ENCODE measurements at regions of chr5 and their contacts with region 1.

Region 1: GRCh38 chr5:139765409-139766217 is 30.0 kb upstream of the PSD2 start:
- DNase-seq: peak; percentile 73
- H3K4me3 ChIP-seq: peak overlapping the region; percentile 56
- CTCF ChIP-seq: peak; percentile 81

Region 2: GRCh38 chr5:138772986-138773594 is 992.5 kb before region 1 on chr5:
- in situ Hi-C with region 1: no loop called
- DNase-seq: no peak
- H3K4me3 ChIP-seq: no peak overlapping the region
- CTCF ChIP-seq: no peak

Region 3: DNA sequence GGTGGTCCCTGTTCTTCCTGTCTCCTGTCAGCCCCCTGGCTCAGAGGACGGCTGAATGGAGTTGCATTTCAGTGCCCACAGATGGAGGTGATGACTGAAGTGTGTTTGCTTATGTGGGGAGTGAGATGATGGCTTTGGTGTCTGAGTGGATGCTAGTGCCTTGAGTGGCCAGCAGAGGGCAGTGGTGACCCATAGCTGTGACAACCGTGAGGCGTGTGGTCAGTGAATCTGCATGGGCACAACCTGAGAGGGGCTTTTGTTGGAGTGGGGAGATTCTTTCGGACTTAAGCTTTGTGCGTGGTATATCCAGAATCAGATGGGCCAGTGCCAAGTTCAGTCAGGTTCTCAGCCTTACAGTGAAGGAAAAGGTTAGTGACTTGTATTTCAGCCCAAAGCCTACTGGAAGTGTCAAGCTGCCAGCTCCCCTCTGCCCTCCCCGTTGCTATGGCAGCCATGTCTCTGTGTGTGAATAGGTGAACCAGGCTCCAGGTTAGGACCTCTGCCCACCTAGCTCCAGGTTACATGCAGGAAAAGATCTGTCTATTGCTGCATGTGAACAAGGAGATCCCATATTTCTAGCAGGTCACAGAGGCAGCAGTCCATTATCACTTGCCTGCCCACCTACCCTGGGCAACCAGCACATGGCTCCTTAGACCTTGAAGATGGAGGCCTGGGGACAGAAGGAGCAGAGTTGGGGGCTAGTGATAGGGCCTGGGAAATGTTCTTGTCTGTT is 132.2 kb before region 1 on chr5:
- in situ Hi-C with region 1: loop called (anchors 25 kb)
- DNase-seq: peak; percentile 75
- H3K4me3 ChIP-seq: no peak overlapping the region
- CTCF ChIP-seq: peak; percentile 98

Region 4: GRCh38 chr5:139882961-139883539 is 117.4 kb after region 1 on chr5:
- in situ Hi-C with region 1: no loop called
- DNase-seq: no peak
- H3K4me3 ChIP-seq: no peak overlapping the region
- CTCF ChIP-seq: no peak